ENCODE measurements at regions of chr3 and their contacts with region 1.

Region 1: DNA sequence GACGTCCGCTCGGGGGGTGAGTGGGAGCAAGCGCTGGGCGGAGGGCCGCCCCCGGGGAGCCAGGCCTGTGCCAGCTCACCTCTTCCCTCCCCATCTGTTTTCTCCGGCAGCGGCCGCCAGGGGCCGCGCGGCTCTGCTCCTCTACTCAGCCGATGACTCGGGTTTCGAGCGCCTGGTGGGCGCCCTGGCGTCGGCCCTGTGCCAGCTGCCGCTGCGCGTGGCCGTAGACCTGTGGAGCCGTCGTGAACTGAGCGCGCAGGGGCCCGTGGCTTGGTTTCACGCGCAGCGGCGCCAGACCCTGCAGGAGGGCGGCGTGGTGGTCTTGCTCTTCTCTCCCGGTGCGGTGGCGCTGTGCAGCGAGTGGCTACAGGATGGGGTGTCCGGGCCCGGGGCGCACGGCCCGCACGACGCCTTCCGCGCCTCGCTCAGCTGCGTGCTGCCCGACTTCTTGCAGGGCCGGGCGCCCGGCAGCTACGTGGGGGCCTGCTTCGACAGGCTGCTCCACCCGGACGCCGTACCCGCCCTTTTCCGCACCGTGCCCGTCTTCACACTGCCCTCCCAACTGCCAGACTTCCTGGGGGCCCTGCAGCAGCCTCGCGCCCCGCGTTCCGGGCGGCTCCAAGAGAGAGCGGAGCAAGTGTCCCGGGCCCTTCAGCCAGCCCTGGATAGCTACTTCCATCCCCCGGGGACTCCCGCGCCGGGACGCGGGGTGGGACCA is 632 bp upstream of the CRELD1 start:
- DNase-seq: peak; percentile 95
- ATAC-seq: peak; percentile 76
- H3K4me3 Mint-ChIP-seq: peak overlapping the region; percentile 96
- H3K27ac Mint-ChIP-seq: peak overlapping the region; percentile 95
- H3K4me1 Mint-ChIP-seq: peaks cover 29% of the 10 kb centered on the region
- H3K27me3 Mint-ChIP-seq: no peaks in the 10 kb centered on the region

Region 2: GRCh38 chr3:9396700-9397521 is 536.1 kb before region 1 on chr3:
- CTCF ChIA-PET with region 1: no interaction called
- POLR2A ChIA-PET with region 1: interaction called, 5 read pairs
- intact Hi-C with region 1: loop called in 1 of 2 experiments (anchors 1 kb)
- DNase-seq: peak; percentile 99
- ATAC-seq: peak; percentile 74
- H3K4me3 Mint-ChIP-seq: peak overlapping the region; percentile 93
- H3K27ac Mint-ChIP-seq: peak overlapping the region; percentile 98
- H3K4me1 Mint-ChIP-seq: peaks cover 63% of the 10 kb centered on the region
- H3K27me3 Mint-ChIP-seq: no peaks in the 10 kb centered on the region

Region 3: GRCh38 chr3:9749645-9750555 is 183.1 kb before region 1 on chr3 and contains the start of gene OGG1:
- CTCF ChIA-PET with region 1: no interaction called
- POLR2A ChIA-PET with region 1: no interaction called
- intact Hi-C with region 1: loop called in 1 of 2 experiments (anchors 1 kb)
- DNase-seq: peak; percentile 98
- ATAC-seq: peak; percentile 94
- H3K4me3 Mint-ChIP-seq: peak within 1 kb of the TSS; percentile 87
- H3K27ac Mint-ChIP-seq: peak within 1 kb of the TSS; percentile 91
- H3K4me1 Mint-ChIP-seq: peaks cover 46% of the 10 kb centered on the region
- H3K27me3 Mint-ChIP-seq: no peaks in the 10 kb centered on the region
- total RNA-seq, gene OGG1: 36.4 to 61.6 TPM

Region 4: GRCh38 chr3:9843715-9844438 is 89.1 kb before region 1 on chr3 and contains the start of gene RPUSD3:
- CTCF ChIA-PET with region 1: interaction called, 5 read pairs
- POLR2A ChIA-PET with region 1: no interaction called
- intact Hi-C with region 1: loop called (anchors 1 to 5 kb)
- DNase-seq: peak; percentile 98
- ATAC-seq: peak; percentile 97
- H3K4me3 Mint-ChIP-seq: peak within 1 kb of the TSS; percentile 99
- H3K27ac Mint-ChIP-seq: peak within 1 kb of the TSS; percentile 96
- H3K4me1 Mint-ChIP-seq: peaks cover 28% of the 10 kb centered on the region
- H3K27me3 Mint-ChIP-seq: no peaks in the 10 kb centered on the region
- total RNA-seq, gene RPUSD3: 79.2 to 81.5 TPM

Region 5: DNA sequence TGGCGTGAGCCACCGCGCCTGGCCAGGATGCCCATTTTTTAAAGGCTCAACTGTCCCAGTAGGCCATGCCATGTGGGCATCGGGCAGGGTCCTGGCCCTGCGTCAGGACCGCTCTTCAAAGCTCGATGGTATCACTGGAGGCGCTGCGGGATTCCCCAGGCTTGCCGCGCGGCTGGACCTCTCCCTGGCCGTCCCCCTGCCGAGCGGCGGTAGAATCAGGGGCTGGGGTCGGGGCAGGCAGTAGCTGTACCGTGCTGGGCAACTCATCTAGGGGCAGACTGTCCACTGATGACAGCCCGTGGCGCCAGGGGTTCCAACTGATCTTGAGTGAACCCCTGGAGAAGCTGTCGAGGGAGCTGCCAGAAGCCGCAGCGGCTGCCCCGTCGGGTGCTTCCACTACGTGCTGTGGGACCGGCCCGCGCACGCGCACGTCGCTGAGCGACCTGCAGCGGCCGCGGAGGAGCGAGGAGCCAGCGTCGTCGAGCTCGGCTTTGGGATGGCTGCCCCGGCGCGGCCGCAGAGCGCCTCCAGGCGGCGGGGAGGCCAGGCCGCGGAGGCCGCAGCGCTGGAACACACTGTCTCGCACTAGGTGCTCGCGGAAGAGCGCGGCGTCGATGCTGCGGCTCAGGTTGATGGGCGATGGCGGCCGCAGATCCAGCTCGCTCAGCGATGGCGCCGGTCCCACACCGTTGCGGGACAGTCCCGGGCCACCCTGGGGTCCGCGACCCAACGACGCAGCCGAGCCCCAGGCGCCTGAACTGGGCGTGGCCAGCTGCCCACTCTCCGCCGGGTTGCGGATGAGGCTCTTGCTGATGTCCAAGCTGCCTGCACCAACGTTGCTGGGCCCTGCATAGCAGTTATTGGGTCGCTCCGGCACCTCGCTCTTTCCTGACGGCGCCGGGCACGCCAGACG is 13.4 kb after region 1 on chr3:
- CTCF ChIA-PET with region 1: interaction called, 35 read pairs
- POLR2A ChIA-PET with region 1: interaction called, 10 read pairs
- intact Hi-C with region 1: loop called (anchors 1 kb)
- DNase-seq: peak; percentile 90
- ATAC-seq: peak; percentile 88
- H3K4me3 Mint-ChIP-seq: peak overlapping the region; percentile 76
- H3K27ac Mint-ChIP-seq: peak overlapping the region; percentile 85
- H3K4me1 Mint-ChIP-seq: peaks cover 14% of the 10 kb centered on the region
- H3K27me3 Mint-ChIP-seq: no peaks in the 10 kb centered on the region

Region 6: DNA sequence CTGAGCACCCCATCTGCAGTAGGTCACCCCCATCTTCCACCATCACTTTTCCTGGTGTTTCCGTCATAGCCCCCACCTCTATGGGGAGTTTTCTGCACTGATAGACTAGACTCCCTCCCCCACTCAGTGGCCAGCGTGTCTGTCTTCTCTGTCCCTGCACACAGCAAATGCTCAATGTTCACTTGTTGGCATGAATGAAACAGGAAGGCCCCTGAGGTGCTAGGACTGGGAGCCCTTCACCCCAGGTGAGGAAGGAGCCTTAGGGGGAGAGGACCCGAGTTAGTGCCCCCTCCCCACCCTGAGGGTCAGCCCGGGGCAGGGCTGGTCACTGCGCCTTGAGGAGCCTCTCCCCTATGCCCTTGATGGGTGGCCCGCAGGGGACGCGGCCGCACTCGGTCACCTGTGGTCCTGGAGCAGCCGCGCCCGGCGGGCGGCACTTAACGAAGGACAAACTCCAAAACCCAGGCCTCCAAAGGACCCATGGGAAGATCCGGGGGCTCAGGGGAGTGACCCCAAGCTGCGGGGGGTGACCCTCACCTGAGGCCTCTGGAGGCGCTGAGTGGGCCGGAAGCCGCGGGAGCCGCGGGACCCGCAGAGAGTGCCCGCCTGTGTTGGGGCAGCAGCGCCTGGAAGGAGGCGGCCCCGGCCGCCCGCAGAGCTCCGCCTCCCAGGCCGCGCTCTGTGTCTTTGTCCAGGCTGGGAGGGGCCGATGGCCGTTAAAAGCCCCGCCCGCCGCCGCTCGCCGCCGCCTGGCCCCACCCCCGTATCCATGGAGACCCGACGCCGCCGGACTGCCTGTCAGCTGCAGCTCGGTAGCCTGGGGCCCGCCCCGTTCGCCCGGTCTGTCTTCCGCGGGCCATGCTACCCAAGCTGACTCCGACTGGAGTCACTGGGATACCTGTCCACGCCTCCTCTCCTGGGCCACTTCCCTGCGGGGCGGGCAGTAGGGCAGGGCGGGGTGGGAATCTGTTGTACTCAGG is 77.8 kb after region 1 on chr3:
- CTCF ChIA-PET with region 1: interaction called, 4 read pairs
- POLR2A ChIA-PET with region 1: no interaction called
- intact Hi-C with region 1: loop called in 1 of 2 experiments (anchors 2 kb)
- DNase-seq: peak; percentile 92
- ATAC-seq: peak; percentile 83
- H3K4me3 Mint-ChIP-seq: peak overlapping the region; percentile 22
- H3K27ac Mint-ChIP-seq: no peak overlapping the region
- H3K4me1 Mint-ChIP-seq: peaks cover 20% of the 10 kb centered on the region
- H3K27me3 Mint-ChIP-seq: peaks cover 6% of the 10 kb centered on the region

Region 7: DNA sequence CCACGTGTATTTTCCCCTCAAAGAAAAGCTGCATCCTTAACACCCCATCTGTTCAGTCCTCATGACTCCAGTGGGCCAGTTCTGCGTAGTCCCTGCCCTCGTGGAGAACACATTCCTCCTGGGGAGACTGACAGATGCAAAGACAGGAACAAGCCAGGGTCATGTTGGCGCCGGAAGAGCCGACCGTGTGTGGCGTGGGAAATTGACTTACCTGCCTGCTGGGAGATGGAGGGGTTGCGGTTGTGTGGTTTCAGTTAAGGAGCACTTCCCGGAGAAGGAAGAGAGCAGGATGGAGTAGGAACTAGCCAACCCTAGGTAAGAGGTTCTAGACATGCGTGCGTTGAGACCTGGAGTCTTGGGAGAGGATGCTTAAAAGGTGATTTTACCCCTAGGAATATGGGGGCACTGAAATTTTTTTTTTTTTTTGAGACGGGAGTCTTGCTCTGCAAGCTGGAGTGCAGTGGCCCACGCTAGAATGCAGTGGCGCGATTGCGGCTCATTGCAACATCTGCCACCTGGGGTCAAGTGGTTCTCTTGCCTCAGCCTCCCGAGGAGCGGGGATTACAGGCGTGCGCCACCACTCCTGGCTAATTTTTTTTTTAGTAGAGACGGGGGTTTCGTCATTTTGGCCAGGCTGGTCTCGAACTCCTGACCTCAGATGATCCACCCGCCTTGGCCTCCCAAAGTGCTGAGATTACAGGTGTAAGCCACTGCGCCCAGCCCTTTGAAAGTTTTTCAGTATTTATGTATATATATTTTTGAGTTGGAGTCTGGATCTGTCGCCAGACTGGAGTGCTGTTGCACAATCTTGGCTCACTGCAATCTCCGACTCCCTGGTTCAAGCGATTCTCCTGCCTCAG is 209.9 kb after region 1 on chr3:
- CTCF ChIA-PET with region 1: no interaction called
- POLR2A ChIA-PET with region 1: interaction called, 3 read pairs
- intact Hi-C with region 1: loop called in 1 of 2 experiments (anchors 1 kb)
- DNase-seq: peak; percentile 57
- ATAC-seq: peak; percentile 15
- H3K4me3 Mint-ChIP-seq: peak overlapping the region; percentile 97
- H3K27ac Mint-ChIP-seq: peak overlapping the region; percentile 89
- H3K4me1 Mint-ChIP-seq: peaks cover 28% of the 10 kb centered on the region
- H3K27me3 Mint-ChIP-seq: no peaks in the 10 kb centered on the region

Region 8: GRCh38 chr3:10173926-10174435 is 241.0 kb after region 1 on chr3:
- CTCF ChIA-PET with region 1: no interaction called
- POLR2A ChIA-PET with region 1: no interaction called
- intact Hi-C with region 1: no loop called
- DNase-seq: peak; percentile 24
- ATAC-seq: peak; percentile 49
- H3K4me3 Mint-ChIP-seq: no peak overlapping the region
- H3K27ac Mint-ChIP-seq: no peak overlapping the region
- H3K4me1 Mint-ChIP-seq: peaks cover 22% of the 10 kb centered on the region
- H3K27me3 Mint-ChIP-seq: no peaks in the 10 kb centered on the region